Mammary epithelial cell (primary cell): ENCODE measurements at regions of chr10 and their contacts with region 1.

Region 1: GRCh38 chr10:102167861-102168260 is 15.7 kb downstream of the NOLC1 start:
- DNase-seq: no peak
- H3K4me3 ChIP-seq: no peak overlapping the region
- H3K27ac ChIP-seq: no peak overlapping the region
- H3K4me1 ChIP-seq: no peaks in the 10 kb centered on the region
- H3K27me3 ChIP-seq: no peaks in the 10 kb centered on the region
- CTCF ChIP-seq: no peak

Region 2: DNA sequence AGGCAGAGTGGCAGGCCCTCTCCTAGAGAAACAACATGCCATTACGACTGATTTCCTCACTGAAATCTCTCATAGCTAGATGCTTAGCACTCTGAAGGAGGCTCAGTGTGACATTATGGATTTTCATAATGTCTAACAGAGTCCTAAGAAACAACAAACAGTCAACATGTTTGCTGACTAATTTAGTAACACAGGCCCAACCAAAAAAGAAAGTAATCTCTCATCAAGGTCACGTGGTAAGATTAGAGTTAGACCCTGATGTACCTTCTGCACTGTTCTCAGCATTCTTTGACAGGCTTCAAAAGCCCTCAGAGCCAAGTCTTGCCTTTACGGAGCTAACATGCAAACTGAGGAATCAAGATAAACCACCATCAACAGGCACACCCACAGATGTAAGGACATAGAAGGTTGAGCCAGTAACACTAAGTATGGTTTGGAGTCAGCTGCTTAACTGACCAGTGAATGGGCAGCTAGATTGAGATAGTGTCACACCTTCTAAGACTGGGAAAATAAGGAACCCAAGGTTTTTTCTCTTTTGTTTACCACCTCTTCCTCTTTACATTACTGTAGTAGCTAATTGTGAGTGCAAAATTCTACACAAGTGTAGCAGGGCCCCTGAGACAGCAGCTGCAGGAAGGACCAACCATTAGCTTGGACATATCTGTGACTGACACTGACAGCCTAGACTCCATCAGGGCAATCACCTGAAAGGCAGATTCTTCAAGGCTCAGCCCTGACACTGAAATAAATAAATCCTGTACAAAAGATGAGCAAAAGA is 308.9 kb before region 1 on chr10:
- CTCF ChIA-PET with region 1: no interaction called
- dilution Hi-C with region 1: no loop called
- in situ Hi-C with region 1: no loop called
- intact Hi-C with region 1: no loop called
- DNase-seq: no peak
- H3K4me3 ChIP-seq: no peak overlapping the region
- H3K27ac ChIP-seq: no peak overlapping the region
- H3K4me1 ChIP-seq: no peaks in the 10 kb centered on the region
- H3K27me3 ChIP-seq: no peaks in the 10 kb centered on the region
- CTCF ChIP-seq: no peak

Region 3: DNA sequence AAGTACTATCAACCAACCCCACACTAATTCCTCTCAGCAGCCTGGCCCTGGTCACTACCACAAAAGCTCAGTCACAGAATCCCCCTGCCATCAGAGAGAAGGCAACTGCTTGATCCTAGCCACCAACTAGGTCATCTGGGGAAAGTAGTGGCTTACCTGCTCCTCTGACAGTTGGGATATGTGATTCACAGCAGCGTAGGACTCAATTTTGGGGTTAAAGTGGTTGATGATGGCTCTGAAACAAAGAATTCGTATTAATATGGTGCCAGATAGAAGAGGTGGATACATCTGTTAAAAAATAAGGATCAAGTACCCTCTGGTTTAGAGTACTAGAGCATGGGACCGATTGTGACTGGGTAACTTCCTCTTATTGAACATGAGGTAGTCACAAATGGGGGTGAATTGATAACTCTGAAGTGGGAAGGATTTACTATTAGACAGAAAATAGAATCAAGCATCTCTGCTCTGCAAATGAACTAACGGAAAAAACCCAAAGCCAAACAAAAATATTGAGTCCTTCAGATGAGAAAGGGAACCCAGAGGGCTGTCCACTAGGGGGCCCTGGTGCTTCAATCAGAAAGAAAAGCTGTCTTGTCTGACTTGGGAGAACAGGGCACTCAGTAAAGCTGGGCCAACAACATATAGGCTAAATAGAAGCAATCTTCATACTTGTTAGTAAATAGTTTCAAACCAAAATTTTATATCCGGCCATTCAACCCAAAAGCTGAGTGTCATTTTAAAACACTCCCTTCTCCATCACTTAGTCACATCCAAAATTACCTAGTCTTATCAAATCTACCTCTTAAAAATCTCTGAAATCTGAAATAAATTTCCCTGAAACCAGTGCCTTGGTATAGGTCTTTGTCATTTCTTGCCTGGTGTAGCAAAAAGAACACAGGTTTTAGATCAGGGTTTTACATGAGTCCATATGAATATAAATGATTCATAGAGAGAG is 278.3 kb before region 1 on chr10:
- CTCF ChIA-PET with region 1: no interaction called
- dilution Hi-C with region 1: no loop called
- in situ Hi-C with region 1: no loop called
- intact Hi-C with region 1: no loop called
- DNase-seq: peak; percentile 40
- H3K4me3 ChIP-seq: no peak overlapping the region
- H3K27ac ChIP-seq: no peak overlapping the region
- H3K4me1 ChIP-seq: no peaks in the 10 kb centered on the region
- H3K27me3 ChIP-seq: no peaks in the 10 kb centered on the region
- CTCF ChIP-seq: peak; percentile 89 to 91

Region 4: DNA sequence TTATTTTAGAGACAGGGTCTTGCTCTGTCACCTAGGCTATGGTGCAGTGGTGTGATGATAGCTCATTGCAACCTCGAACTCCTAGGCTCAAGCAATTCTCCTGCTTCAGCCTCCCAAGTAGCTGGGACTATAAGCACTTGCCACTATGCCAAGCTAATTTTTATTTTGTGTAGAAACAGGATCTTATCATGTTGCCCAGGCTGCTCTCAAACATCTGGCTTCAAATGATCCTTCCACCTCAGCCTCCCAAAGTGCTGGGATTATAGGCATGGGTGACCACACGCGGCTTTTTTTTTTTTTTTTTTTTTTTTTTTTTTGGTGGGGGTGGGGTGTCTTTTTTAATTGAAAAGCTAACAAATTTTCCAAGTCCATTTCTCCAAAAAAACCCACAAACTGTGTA is 84.3 kb before region 1 on chr10:
- CTCF ChIA-PET with region 1: interaction called, 22 read pairs
- dilution Hi-C with region 1: no loop called
- in situ Hi-C with region 1: no loop called
- intact Hi-C with region 1: no loop called
- DNase-seq: no peak
- H3K4me3 ChIP-seq: no peak overlapping the region
- H3K27ac ChIP-seq: no peak overlapping the region
- H3K4me1 ChIP-seq: no peaks in the 10 kb centered on the region
- H3K27me3 ChIP-seq: no peaks in the 10 kb centered on the region
- CTCF ChIP-seq: no peak

Region 5: GRCh38 chr10:102352066-102352715 is 184.3 kb after region 1 on chr10:
- CTCF ChIA-PET with region 1: interaction called, 6 read pairs
- dilution Hi-C with region 1: no loop called
- in situ Hi-C with region 1: no loop called
- intact Hi-C with region 1: loop called (anchors 1 kb)
- DNase-seq: peak; percentile 32
- H3K4me3 ChIP-seq: no peak overlapping the region
- H3K27ac ChIP-seq: no peak overlapping the region
- H3K4me1 ChIP-seq: no peaks in the 10 kb centered on the region
- H3K27me3 ChIP-seq: no peaks in the 10 kb centered on the region
- CTCF ChIP-seq: peak; percentile 93 to 96

Region 6: GRCh38 chr10:102420810-102421644 is 253.2 kb after region 1 on chr10 and contains the start of gene FBXL15:
- CTCF ChIA-PET with region 1: interaction called, 3 read pairs
- dilution Hi-C with region 1: no loop called
- in situ Hi-C with region 1: no loop called
- intact Hi-C with region 1: loop called (anchors 1 kb)
- DNase-seq: peak; percentile 96
- H3K4me3 ChIP-seq: peak within 1 kb of the TSS; percentile 72 to 88 (median 74)
- H3K27ac ChIP-seq: peak within 1 kb of the TSS; percentile 56
- H3K4me1 ChIP-seq: peaks cover 38% of the 10 kb centered on the region
- H3K27me3 ChIP-seq: no peaks in the 10 kb centered on the region
- CTCF ChIP-seq: no peak
- total RNA-seq, gene FBXL15: 5.0 to 7.0 TPM

Region 7: GRCh38 chr10:102476466-102477141 is 308.7 kb after region 1 on chr10:
- CTCF ChIA-PET with region 1: no interaction called
- dilution Hi-C with region 1: no loop called
- in situ Hi-C with region 1: no loop called
- intact Hi-C with region 1: loop called (anchors 1 kb)
- DNase-seq: no peak
- H3K4me3 ChIP-seq: no peak overlapping the region
- H3K27ac ChIP-seq: no peak overlapping the region
- H3K4me1 ChIP-seq: no peaks in the 10 kb centered on the region
- H3K27me3 ChIP-seq: no peaks in the 10 kb centered on the region
- CTCF ChIP-seq: no peak